Heart left ventricle (tissue), 16 donors: ENCODE measurements at regions of chr17 and their contacts with region 1.

Region 1: GRCh38 chr17:74833501-74834377 is 25.9 kb downstream of the GRIN2C start:
- DNase-seq: peak in 1 of 5 donors; percentile 40
- ATAC-seq: peak in 1 of 4 donors; percentile 50
- H3K4me3 ChIP-seq: no peak overlapping the region
- H3K27ac ChIP-seq: no peak overlapping the region
- H3K4me1 ChIP-seq: peaks cover 0 to 6% (median 0%) of the 10 kb centered on the region in 12 donors
- H3K27me3 ChIP-seq: no peaks in the 10 kb centered on the region
- CTCF ChIP-seq: no peak
- POLR2A ChIP-seq: no peak

Region 2: DNA sequence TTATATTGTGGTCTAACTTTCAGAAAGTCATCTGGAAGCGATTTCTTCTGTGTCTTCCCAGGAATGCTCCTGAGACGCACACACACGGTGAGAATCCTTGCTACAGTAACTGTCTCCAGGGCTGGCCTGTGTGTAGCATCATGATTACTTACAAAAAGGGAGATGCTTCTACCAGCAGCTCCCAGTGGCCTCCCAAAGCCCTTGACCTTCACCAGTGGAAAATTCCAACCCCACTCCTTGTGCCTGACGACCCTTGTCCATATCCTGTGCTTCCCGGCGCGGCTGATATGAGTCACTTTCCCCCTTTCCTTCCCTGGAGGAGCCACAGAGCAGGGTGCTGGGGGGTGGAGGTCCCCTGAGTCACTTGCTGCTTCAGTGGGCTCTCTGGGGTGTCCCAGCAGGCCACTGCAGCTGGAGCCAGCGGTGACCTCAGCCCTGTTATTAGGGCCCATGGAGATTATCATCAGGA is 35.5 kb before region 1 on chr17:
- intact Hi-C with region 1: loop called in 1 of 10 experiments (anchors 1 kb)
- DNase-seq: no peak
- ATAC-seq: no peak
- H3K4me3 ChIP-seq: no peak overlapping the region
- H3K27ac ChIP-seq: no peak overlapping the region
- H3K4me1 ChIP-seq: no peaks in the 10 kb centered on the region
- H3K27me3 ChIP-seq: no peaks in the 10 kb centered on the region
- CTCF ChIP-seq: no peak
- POLR2A ChIP-seq: no peak